ENCODE measurements at regions of chr6 and their contacts with region 1.

Region 1: GRCh38 chr6:29097803-29098202 is 1.5 kb upstream of the OR2J1 start:
- DNase-seq: no peak

Region 2: DNA sequence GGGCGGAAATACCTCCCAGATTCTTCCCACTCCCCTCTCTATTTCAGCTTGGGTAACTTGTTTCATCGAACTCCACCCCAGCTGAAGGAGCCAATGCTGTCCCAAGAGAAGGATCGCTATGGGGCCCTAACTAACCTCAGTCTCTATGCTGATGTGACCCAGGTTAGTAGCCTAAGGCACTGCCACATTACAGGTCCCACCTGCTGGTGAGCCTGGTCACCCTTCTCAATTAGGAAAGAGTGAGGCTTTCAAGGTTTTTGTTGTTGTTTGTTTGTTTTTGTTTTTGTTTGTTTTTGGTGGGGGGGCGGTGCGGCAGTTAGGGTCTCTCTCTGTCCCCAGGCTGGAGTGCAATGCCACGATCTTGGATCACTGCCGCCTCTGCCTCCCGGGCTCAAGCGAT is 1354.0 kb before region 1 on chr6:
- intact Hi-C with region 1: no loop called
- DNase-seq: no peak

Region 3: GRCh38 chr6:28315628-28316027 is 782.2 kb before region 1 on chr6:
- intact Hi-C with region 1: loop called in 1 of 2 experiments (anchors 5 kb)
- DNase-seq: no peak

Region 4: GRCh38 chr6:29227235-29227634 is 129.4 kb after region 1 on chr6:
- intact Hi-C with region 1: no loop called
- DNase-seq: no peak